ENCODE measurements at regions of chr16 and their contacts with region 1.

Region 1: DNA sequence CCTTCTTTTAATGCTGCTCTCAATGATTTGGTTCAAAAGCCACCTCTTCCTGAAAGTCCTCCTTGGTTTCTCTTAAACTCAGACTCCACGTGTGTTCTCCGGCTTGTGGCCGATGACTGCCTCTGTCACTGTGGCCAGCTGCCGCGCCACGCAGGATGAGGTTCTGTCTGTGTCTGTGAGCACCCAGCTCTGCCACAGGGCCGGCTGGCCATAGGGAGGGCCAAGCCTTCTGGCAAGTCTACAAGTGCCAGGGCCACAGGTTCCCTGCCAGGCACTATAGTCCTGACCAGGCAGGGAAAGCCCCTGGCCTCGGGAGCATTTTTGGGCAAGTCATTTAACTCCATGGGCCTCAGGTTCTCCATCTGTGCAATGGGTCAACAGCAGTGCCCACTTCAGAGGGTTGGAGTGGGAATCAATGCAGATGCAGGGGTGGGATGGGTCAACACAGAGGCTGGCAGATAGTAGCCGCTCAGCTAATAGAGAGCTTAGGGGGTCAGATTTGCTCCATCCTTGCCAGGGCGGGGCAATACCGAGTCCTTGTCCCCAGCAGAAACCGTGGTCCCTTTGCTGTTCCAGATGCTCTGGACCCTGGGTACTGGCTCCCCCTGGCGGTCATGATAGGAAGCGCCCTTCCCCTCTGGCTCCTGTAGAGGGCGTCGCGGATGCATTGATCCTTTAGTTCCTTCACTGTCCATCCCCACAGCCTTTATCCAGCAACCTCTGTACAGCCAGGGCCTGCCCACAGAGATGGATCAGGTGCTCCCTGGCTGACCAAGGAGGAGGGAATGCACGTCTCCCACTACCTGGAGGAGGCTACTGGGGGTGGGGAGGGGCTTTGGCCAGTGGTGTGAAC is 19.3 kb upstream of the ADGRG3 start:
- DNase-seq: peak; percentile 93
- ATAC-seq: peak; percentile 83
- H3K4me3 Mint-ChIP-seq: no peak overlapping the region
- H3K27ac Mint-ChIP-seq: peak overlapping the region; percentile 71
- H3K4me1 Mint-ChIP-seq: peaks cover 45% of the 10 kb centered on the region
- H3K27me3 Mint-ChIP-seq: no peaks in the 10 kb centered on the region

Region 2: DNA sequence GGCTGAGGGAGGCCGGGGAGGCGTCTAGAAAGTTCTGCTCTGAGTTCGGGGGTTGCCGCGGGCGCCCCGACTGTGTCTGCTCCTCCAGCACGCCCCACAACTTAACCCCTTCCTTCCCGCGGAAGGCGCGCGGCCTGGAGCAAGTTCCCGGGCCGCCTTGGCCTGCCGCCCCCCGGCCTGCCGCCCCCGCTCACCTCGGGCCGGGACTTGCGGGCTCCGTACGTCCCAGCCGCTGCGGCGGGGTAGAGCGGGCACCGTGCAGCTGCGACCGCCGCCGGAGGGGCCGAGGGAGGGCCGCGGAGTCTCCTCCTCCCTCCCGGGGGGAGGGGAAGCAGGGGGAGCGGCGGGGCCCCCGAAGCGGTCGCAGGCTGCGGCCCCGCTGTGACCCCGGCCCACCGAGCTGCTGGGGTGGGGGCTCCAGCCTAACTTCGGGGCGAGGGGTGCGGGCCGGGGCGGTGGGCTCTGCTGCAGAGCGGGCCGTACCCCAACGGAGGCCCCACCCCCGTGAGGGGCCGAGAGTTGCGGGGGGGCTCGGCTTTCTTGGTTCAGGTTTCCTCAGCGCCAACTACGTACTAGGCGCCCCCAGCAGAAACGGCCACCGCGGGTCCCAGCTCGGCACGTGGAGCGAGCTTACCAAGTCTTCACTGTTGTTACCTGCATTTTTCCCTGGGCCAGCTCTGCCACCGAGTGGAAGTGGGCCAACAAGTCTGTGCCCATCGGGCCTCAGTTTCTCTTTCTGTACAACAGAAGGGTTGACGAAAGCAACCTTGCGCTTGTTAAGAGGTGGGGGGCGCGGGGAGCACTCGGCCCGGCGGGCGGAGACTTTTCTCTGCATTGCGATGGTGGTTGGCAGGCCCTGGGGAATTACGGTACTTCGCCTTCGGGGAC is 112.3 kb before region 1 on chr16 and contains the start of gene CCDC102A:
- CTCF ChIA-PET with region 1: interaction called, 21 read pairs
- DNase-seq: peak; percentile 74
- ATAC-seq: peak; percentile 38
- H3K4me3 Mint-ChIP-seq: peak within 1 kb of the TSS; percentile 84
- H3K27ac Mint-ChIP-seq: peak within 1 kb of the TSS; percentile 90
- H3K4me1 Mint-ChIP-seq: peaks cover 79% of the 10 kb centered on the region
- H3K27me3 Mint-ChIP-seq: no peaks in the 10 kb centered on the region
- total RNA-seq, gene CCDC102A: 19.7 to 20.2 TPM

Region 3: DNA sequence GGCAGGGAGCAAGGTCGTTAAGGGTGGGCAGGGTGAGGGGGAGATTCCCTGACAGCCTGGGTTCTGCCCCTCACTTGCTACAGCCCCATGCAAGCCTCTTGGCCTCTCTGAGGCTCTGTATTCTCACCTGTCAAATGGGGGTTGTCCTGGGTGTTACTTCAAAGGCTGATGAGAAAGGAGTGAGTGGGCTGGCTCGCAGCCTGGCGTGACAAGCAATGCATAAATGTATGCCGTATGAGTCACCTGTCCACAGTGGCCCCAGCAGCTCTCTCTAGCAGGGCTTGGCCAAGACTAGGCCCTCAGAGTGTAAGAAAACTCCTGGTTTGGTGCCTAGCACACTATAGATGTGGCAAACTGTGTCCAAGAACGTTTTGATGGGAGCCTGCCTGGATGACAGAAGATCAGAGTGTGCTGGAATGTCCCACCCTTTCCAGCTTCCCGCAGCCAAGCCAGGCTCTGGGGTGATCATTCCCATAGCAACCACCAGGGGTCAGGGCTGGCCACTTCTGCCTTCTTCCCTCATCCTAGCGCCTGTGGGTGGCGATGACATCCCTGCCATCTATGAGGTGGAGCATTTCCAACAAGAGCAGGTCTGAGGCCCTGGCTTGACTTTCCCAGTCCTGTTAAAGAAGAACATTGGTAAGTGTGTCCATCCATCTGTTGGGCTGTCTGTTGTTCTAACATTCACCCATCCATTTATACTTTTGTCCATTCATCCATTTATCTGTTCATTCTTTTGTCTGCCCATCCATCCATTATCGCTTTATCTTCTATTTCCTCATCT is 57.5 kb before region 1 on chr16:
- CTCF ChIA-PET with region 1: interaction called, 559 read pairs
- DNase-seq: peak; percentile 90
- ATAC-seq: peak; percentile 78
- H3K4me3 Mint-ChIP-seq: peak overlapping the region; percentile 68
- H3K27ac Mint-ChIP-seq: peak overlapping the region; percentile 91
- H3K4me1 Mint-ChIP-seq: peaks cover 67% of the 10 kb centered on the region
- H3K27me3 Mint-ChIP-seq: no peaks in the 10 kb centered on the region

Region 4: DNA sequence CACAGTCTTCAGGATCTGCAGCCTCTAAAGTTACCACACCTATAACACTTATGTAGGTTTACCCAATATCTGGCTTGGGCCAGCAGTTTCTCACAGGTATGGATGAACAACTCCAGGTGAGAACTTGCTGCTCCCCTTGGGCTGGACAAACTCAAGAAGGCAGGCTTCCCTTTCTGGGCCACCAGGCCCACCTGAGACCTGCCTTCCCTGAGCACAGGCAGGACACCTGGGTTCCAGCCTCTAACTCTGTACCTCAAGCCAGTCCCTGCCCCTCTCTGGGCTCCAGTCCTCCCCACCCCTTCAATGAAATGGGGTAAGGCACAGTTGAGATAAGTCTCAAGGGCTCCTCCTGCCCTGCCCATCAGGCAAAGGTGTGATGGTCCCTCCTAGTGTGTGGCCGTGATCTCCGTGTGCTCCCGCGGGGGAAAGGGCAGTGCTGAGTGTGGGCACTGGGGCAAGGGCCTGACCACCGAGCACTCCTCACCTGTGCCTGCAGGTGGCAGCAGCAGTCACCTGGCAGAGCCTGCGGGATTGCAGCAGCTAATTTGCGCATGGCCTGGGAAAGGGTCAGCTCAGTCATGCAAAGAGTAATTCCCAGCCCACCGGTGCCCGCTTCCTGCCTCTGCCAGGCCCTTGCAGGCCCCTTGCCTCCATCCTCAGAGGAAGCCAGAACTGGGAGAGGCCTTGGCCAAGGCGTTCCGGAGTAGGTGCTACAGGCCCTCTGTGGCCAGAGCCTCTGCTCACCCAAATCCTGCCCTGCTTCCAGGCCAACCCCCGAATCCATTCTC is 48.6 kb before region 1 on chr16:
- CTCF ChIA-PET with region 1: interaction called, 559 read pairs
- DNase-seq: peak; percentile 65
- ATAC-seq: no peak
- H3K4me3 Mint-ChIP-seq: no peak overlapping the region
- H3K27ac Mint-ChIP-seq: peak overlapping the region; percentile 99
- H3K4me1 Mint-ChIP-seq: peaks cover 72% of the 10 kb centered on the region
- H3K27me3 Mint-ChIP-seq: no peaks in the 10 kb centered on the region

Region 5: GRCh38 chr16:57609541-57610401 is 39.0 kb before region 1 on chr16:
- CTCF ChIA-PET with region 1: interaction called, 137 read pairs
- DNase-seq: peak; percentile 95
- ATAC-seq: peak; percentile 94
- H3K4me3 Mint-ChIP-seq: peak overlapping the region; percentile 67
- H3K27ac Mint-ChIP-seq: peak overlapping the region; percentile 97
- H3K4me1 Mint-ChIP-seq: peaks cover 82% of the 10 kb centered on the region
- H3K27me3 Mint-ChIP-seq: no peaks in the 10 kb centered on the region

Region 6: GRCh38 chr16:57689762-57690558 is 41.1 kb after region 1 on chr16:
- CTCF ChIA-PET with region 1: interaction called, 16 read pairs
- DNase-seq: peak; percentile 82
- ATAC-seq: peak; percentile 83
- H3K4me3 Mint-ChIP-seq: peak overlapping the region; percentile 33
- H3K27ac Mint-ChIP-seq: peak overlapping the region; percentile 88
- H3K4me1 Mint-ChIP-seq: peaks cover 36% of the 10 kb centered on the region
- H3K27me3 Mint-ChIP-seq: peaks cover 2% of the 10 kb centered on the region

Region 7: GRCh38 chr16:57734925-57735754 is 86.3 kb after region 1 on chr16:
- CTCF ChIA-PET with region 1: interaction called, 31 read pairs
- DNase-seq: peak; percentile 99
- ATAC-seq: peak; percentile 90
- H3K4me3 Mint-ChIP-seq: peak overlapping the region; percentile 92
- H3K27ac Mint-ChIP-seq: peak overlapping the region; percentile 92
- H3K4me1 Mint-ChIP-seq: peaks cover 32% of the 10 kb centered on the region
- H3K27me3 Mint-ChIP-seq: no peaks in the 10 kb centered on the region